WTC11 (cell line): ENCODE measurements at regions of chr3 and their contacts with region 1.

Region 1: GRCh38 chr3:151838583-151839312 is 24.8 kb downstream of the AADAC start:
- DNase-seq: peak; percentile 22
- ATAC-seq: peak; percentile 88
- H3K4me3 Mint-ChIP-seq: no peak overlapping the region
- H3K27ac Mint-ChIP-seq: no peak overlapping the region
- H3K4me1 Mint-ChIP-seq: peaks cover 14% of the 10 kb centered on the region
- H3K27me3 Mint-ChIP-seq: no peaks in the 10 kb centered on the region
- CTCF ChIP-seq: peak; percentile 52; the same call in 1 of the 2 replicates

Region 2: GRCh38 chr3:151434151-151434890 is 404.4 kb before region 1 on chr3:
- CTCF ChIA-PET with region 1: interaction called, 46 read pairs
- POLR2A ChIA-PET with region 1: no interaction called
- DNase-seq: no peak
- ATAC-seq: no peak
- H3K4me3 Mint-ChIP-seq: no peak overlapping the region
- H3K27ac Mint-ChIP-seq: no peak overlapping the region
- H3K4me1 Mint-ChIP-seq: peaks cover 33% of the 10 kb centered on the region
- H3K27me3 Mint-ChIP-seq: peaks cover 4% of the 10 kb centered on the region; the same call in 1 of the 2 replicates
- CTCF ChIP-seq: no peak

Region 3: DNA sequence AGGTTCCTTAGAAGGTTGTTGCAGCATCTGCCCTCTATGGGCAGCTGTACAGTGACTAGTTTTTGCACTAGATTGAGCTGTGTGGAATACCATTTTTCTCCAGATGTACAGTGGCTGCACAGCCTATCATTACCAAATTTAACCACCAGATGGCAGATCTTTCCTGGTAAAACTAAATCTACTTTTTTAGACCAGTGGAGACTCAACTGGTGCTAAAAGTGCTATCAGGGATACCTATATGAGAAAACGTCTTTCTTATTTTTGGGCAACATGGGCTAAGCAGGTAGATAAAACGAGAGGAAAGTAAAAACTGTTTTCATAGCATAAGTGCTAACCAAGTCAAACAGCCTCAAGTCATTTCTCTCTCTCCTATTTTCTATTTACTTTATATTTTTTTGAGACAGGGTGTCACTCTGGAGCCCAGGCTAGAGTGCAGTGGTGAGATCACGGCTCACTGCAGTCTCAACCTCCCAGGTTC is 399.1 kb before region 1 on chr3:
- CTCF ChIA-PET with region 1: interaction called, 46 read pairs
- POLR2A ChIA-PET with region 1: no interaction called
- DNase-seq: no peak
- ATAC-seq: peak; percentile 74
- H3K4me3 Mint-ChIP-seq: no peak overlapping the region
- H3K27ac Mint-ChIP-seq: no peak overlapping the region
- H3K4me1 Mint-ChIP-seq: peaks cover 22% of the 10 kb centered on the region
- H3K27me3 Mint-ChIP-seq: no peaks in the 10 kb centered on the region
- CTCF ChIP-seq: peak; percentile 68

Region 4: GRCh38 chr3:151468284-151468917 is 370.3 kb before region 1 on chr3:
- CTCF ChIA-PET with region 1: interaction called, 11 read pairs
- POLR2A ChIA-PET with region 1: no interaction called
- DNase-seq: peak; percentile 48
- ATAC-seq: peak; percentile 96
- H3K4me3 Mint-ChIP-seq: no peak overlapping the region
- H3K27ac Mint-ChIP-seq: 0 out of 2 replicates have a peak overlapping the region, but pooled peaks have one; percentile 43
- H3K4me1 Mint-ChIP-seq: 0 out of 2 replicates have a peak, but pooled peaks cover 3% of the 10 kb centered on the region
- H3K27me3 Mint-ChIP-seq: no peaks in the 10 kb centered on the region
- CTCF ChIP-seq: peak; percentile 69

Region 5: DNA sequence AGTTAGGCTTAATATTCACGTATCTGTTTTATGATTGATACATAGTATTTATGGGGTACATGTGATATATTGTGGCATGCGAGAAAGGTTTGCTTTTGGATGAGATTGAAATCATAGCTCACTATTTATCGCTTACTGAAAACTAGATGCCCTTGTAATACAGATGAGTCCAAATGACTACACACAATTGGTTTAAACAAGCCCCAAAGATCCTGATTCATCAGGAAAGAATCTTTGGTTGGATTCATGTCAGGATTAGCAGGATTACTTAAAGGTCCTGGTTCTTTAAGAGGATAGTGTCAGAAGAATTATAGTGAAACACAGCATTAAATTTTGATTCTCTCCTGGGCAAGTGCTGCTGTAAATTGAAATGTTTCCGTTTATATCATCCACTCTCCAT is 43.5 kb before region 1 on chr3:
- CTCF ChIA-PET with region 1: no interaction called
- POLR2A ChIA-PET with region 1: no interaction called
- DNase-seq: no peak
- ATAC-seq: no peak
- H3K4me3 Mint-ChIP-seq: no peak overlapping the region
- H3K27ac Mint-ChIP-seq: no peak overlapping the region
- H3K4me1 Mint-ChIP-seq: no peaks in the 10 kb centered on the region
- H3K27me3 Mint-ChIP-seq: no peaks in the 10 kb centered on the region
- CTCF ChIP-seq: no peak

Region 6: DNA sequence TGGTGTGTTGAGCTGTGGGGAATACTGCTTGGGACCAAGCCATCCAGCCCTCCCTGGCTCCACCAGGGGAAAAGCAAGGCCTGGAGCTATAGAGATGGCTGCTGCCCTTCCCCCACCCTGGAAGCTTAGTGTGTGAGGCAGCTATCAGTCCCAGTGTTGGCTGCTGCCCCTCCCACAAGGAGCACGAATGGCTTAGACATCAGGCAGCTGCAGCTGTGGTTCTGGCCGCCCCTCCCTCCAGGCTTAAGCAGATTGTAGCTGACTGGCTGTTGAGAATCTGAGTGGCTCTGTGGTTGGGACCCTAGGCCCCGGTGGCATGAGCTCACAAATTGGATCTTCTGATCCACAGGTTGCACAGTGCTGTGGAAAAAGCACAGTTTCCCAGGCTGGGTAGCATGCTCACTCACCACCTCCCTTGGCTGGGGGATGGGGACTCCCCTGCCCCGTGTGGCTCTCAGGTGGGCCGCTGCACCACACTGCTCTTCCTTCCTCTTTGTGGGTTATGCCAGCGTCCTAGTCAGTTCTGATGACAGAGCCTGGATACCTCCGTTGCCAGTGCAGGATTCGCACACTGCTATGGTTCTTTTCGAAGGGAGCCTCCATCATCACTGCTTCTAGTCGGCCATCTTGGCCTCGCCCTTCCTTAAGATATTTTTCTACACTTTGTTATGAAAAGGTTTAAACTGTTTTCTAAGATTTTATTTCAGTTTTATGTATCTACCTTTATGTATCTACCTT is 13.5 kb after region 1 on chr3:
- CTCF ChIA-PET with region 1: no interaction called
- POLR2A ChIA-PET with region 1: no interaction called
- DNase-seq: no peak
- ATAC-seq: 0 out of 2 replicates have a peak, but pooled peaks have one; percentile 18
- H3K4me3 Mint-ChIP-seq: no peak overlapping the region
- H3K27ac Mint-ChIP-seq: no peak overlapping the region
- H3K4me1 Mint-ChIP-seq: no peaks in the 10 kb centered on the region
- H3K27me3 Mint-ChIP-seq: no peaks in the 10 kb centered on the region
- CTCF ChIP-seq: no peak